Activated T-helper 1 cell treated with anti-CD3 and anti-CD28 coated beads, Interleukin-12 subunit alpha, Interleukin-12 subunit beta, Interleukin-2, Interleukin-4 antibody, amounts not matched to agents 30 ng/mL and 10 ng/mL and 1 ng/mL, durations not matched to agents 14 hours and 24 hours and 36 hours (primary cell): ENCODE measurements at regions of chr2 and their contacts with region 1.

Region 1: GRCh38 chr2:3461801-3462492 is 57.4 kb downstream of the ADI1 start:
- DNase-seq: no peak
- H3K4me3 Mint-ChIP-seq: no peak overlapping the region
- H3K27ac Mint-ChIP-seq: no peak overlapping the region
- H3K4me1 Mint-ChIP-seq: peaks cover 7% of the 10 kb centered on the region
- H3K27me3 Mint-ChIP-seq: no peaks in the 10 kb centered on the region

Region 2: GRCh38 chr2:2121887-2122286 is 1340.1 kb before region 1 on chr2:
- intact Hi-C with region 1: loop called (anchors 5 kb)
- DNase-seq: no peak
- H3K4me3 Mint-ChIP-seq: no peak overlapping the region
- H3K27ac Mint-ChIP-seq: no peak overlapping the region
- H3K4me1 Mint-ChIP-seq: peaks cover 6% of the 10 kb centered on the region
- H3K27me3 Mint-ChIP-seq: no peaks in the 10 kb centered on the region

Region 3: DNA sequence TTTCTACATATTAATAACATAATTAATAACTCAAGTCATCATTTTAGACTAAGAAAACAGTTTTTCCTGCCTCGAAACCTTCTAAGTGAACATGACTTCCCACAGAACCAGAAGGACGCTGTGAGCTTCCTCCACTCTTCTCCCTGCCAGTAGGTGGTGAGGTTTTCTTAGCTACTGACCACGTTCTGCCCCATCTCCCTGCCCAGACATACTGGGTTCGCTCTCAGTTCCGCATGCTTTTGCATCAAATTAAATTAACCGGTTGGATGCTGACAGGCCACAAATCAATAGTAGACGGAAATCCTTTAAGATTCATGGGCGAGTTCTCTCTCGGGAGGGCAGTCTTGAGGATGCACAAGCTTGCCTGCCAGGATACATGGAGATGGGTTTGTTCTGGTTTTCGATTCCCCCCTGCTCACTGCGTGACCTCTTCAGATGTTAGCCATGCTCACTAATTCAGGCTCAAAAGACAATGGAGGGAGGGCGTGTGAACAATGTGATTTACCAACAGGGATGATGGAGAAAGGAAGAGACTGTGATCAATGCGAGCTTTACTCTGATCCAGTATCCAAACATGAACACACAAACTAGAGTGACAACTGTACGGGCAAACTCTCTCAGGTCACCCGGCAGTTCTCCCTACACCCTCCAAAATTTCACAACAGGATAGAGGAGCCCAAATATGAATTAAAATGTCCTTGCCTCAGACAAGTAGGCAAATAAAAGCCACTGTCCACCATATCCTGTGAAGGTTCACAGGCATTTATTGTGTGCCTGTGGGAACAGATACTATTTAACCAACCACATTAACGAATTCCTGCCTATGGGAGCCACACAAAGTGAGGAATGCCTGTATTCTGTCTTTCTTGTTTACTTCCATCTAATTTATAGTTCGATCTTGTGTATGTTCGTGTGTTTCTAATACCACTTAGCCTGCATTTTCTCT is 460.1 kb before region 1 on chr2:
- intact Hi-C with region 1: loop called (anchors 2 kb)
- DNase-seq: no peak
- H3K4me3 Mint-ChIP-seq: no peak overlapping the region
- H3K27ac Mint-ChIP-seq: no peak overlapping the region
- H3K4me1 Mint-ChIP-seq: no peaks in the 10 kb centered on the region
- H3K27me3 Mint-ChIP-seq: peaks cover 5% of the 10 kb centered on the region

Region 4: GRCh38 chr2:3179208-3179607 is 282.7 kb before region 1 on chr2:
- intact Hi-C with region 1: loop called (anchors 10 kb)
- DNase-seq: no peak
- H3K4me3 Mint-ChIP-seq: no peak overlapping the region
- H3K27ac Mint-ChIP-seq: no peak overlapping the region
- H3K4me1 Mint-ChIP-seq: no peaks in the 10 kb centered on the region
- H3K27me3 Mint-ChIP-seq: no peaks in the 10 kb centered on the region

Region 5: DNA sequence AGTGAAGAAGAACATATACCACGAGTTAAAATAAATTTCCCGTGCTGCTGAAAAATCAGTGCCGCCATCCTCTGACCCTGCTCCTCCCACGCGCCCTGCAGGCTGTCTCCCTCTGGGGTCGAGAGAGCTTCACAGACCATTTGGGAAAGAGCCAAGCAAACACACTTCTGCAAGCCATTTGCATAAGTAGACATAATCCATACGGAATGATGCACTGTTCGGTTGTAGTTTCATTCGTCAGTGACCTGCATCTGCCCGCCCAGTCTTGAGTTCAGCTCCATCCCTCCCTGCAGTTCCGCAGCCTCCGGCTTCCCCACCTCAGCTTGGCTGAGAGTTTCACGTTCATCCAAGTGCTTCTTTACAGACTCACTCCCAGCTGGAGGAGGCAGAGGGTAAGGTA is 12.9 kb before region 1 on chr2:
- intact Hi-C with region 1: no loop called
- DNase-seq: no peak
- H3K4me3 Mint-ChIP-seq: no peak overlapping the region
- H3K27ac Mint-ChIP-seq: no peak overlapping the region
- H3K4me1 Mint-ChIP-seq: no peaks in the 10 kb centered on the region
- H3K27me3 Mint-ChIP-seq: no peaks in the 10 kb centered on the region

Region 6: GRCh38 chr2:3476321-3476980 is 14.5 kb after region 1 on chr2:
- intact Hi-C with region 1: no loop called
- DNase-seq: no peak
- H3K4me3 Mint-ChIP-seq: no peak overlapping the region
- H3K27ac Mint-ChIP-seq: no peak overlapping the region
- H3K4me1 Mint-ChIP-seq: no peaks in the 10 kb centered on the region
- H3K27me3 Mint-ChIP-seq: no peaks in the 10 kb centered on the region